ENCODE measurements at regions of chr3 and their contacts with region 1.

Region 1: GRCh38 chr3:57397175-57398026 is 104.9 kb upstream of the ASB14 start:
- DNase-seq: peak; percentile 69
- CTCF ChIP-seq: peak; percentile 84

Region 2: GRCh38 chr3:56783644-56784447 is 613.6 kb before region 1 on chr3:
- CTCF ChIA-PET with region 1: no interaction called
- POLR2A ChIA-PET with region 1: no interaction called
- DNase-seq: peak; percentile 83
- CTCF ChIP-seq: no peak

Region 3: GRCh38 chr3:57382933-57383332 is 14.5 kb before region 1 on chr3:
- CTCF ChIA-PET with region 1: interaction called, 85 read pairs
- POLR2A ChIA-PET with region 1: no interaction called
- DNase-seq: no peak
- CTCF ChIP-seq: no peak

Region 4: DNA sequence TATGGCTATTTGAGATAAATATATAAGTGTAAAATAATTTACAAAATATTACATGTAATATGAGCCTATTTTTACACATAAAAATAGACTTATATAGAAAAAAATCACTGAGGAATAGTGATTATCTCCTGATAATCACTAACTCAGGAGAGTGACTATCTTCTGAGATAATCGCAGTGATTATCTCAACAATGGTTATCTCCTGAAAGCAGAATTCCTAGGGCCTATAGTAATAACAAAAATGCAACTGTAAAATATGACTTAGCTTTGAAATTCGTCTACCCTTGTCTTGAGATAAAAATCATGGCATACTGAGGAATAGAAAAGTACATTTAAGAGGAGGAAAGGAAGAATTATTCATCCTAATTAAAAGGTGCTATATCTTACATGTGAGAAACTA is 12.1 kb after region 1 on chr3:
- CTCF ChIA-PET with region 1: interaction called, 14 read pairs
- POLR2A ChIA-PET with region 1: no interaction called
- DNase-seq: no peak
- CTCF ChIP-seq: no peak

Region 5: GRCh38 chr3:57787867-57788623 is 390.6 kb after region 1 on chr3:
- CTCF ChIA-PET with region 1: no interaction called
- POLR2A ChIA-PET with region 1: no interaction called
- DNase-seq: peak; percentile 78
- CTCF ChIP-seq: no peak

Region 6: DNA sequence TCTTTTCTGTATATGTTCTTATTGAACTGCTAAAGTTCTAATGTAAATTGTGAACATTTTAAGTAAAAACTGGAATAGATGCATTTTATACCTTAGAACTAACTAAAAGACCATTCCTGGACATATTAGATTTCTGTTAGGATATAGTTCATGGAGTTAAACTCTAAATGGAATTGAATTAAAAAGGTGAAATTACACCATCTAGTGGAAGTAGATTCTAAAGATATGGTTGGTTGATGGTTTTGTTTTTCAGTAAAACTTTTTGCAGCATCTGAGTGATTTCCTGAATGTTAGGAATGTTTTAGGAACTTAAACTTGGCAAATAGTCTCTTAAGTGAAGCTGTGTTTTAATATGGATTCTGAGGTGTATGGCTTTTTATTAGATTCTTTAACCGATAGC is 455.5 kb after region 1 on chr3:
- CTCF ChIA-PET with region 1: interaction called, 13 read pairs
- POLR2A ChIA-PET with region 1: no interaction called
- DNase-seq: peak; percentile 13
- CTCF ChIP-seq: peak; percentile 19

Measured in GM10248 (cell line).